GM12878 (cell line): ENCODE measurements at regions of chr3 and their contacts with region 1.

Region 1: DNA sequence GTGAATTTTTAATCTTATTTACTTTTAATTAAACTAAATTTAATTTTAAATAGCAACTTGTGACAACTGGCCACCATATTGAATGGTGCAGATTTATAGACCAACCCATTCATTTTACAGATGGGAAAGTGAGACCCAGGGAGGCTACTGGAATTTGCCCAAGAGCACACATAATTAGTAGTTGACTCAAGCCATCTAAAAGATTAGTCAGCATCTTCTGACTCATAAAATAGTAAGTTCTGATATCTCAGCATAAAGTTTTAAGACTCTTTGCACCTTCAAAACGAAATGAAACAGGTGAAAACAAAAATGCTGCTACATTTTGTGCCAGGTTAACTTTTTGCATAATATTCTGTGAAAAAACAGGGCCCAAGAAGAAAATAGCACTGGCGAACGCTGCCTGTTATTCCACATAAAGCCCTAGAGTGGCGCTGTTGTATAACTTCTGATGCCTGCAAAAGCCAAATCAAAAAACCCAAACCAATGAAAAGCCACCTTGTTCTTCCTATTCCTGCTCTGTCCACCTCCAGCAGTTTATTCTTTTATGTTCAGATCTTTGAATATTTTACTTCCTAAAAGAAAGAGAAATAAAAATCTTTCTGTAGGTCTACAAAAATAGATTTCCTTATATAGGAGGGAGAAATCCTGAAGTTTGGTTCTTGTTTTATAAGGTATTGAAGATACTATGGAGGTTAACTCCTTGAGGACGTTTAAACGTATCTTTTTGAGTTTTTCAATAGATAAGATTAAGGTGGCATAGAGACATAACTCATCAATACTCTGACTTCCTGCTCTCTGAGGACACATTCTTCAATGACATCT is 62.8 kb downstream of the OTOL1 start:
- DNase-seq: no peak
- ATAC-seq: peak; percentile 72
- H3K4me3 ChIP-seq: no peak overlapping the region
- H3K27ac ChIP-seq: no peak overlapping the region
- H3K4me1 ChIP-seq: no peaks in the 10 kb centered on the region
- H3K27me3 ChIP-seq: peaks cover 0 to 3% of the 10 kb centered on the region in 2 experiments; a peak in 1 of 4 replicates
- CTCF ChIP-seq: peak; percentile 74 to 80 (median 80)
- EP300 ChIP-seq: no peak
- POLR2A ChIP-seq: no peak
- RAD21 ChIP-seq: peak; percentile 80

Region 2: GRCh38 chr3:161449787-161450186 is 109.6 kb before region 1 on chr3:
- CTCF ChIA-PET with region 1: no interaction called
- POLR2A ChIA-PET with region 1: no interaction called
- RAD21 ChIA-PET with region 1: no interaction called
- SMC1A ChIA-PET with region 1: no interaction called
- in situ Hi-C with region 1: no loop called
- intact Hi-C with region 1: loop called (anchors 5 kb)
- DNase-seq: no peak
- ATAC-seq: peak; percentile 36; the same call in 2 of the 3 replicates
- H3K4me3 ChIP-seq: no peak overlapping the region
- H3K27ac ChIP-seq: no peak overlapping the region
- H3K4me1 ChIP-seq: no peaks in the 10 kb centered on the region
- H3K27me3 ChIP-seq: no peaks in the 10 kb centered on the region
- CTCF ChIP-seq: no peak; a peak in 1 of 6 replicates
- EP300 ChIP-seq: no peak
- POLR2A ChIP-seq: no peak
- RAD21 ChIP-seq: no peak

Region 3: DNA sequence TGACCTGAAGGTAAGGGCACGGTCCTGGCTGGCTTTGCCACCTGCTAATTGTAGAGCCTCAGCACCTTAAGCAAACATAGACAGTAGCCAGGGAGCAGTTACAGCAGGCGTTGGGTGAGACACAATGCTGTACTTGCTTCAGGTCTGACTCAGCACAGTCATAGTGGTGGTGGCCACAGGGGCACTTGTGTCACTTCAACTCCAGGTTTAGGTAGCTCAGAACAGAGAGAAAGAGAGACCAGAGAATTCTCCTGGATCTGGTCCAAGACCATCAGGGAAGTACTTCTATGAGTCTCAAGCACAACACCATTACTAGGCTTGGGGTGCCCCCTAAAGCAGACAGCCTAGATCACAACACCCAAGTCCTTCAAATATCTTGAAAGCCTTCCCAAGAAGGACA is 141.6 kb after region 1 on chr3:
- CTCF ChIA-PET with region 1: interaction called, 11 read pairs
- POLR2A ChIA-PET with region 1: no interaction called
- RAD21 ChIA-PET with region 1: interaction called, 13 read pairs
- SMC1A ChIA-PET with region 1: interaction called, 17 read pairs
- in situ Hi-C with region 1: no loop called
- intact Hi-C with region 1: loop called (anchors 1 kb)
- DNase-seq: peak; percentile 7
- ATAC-seq: peak; percentile 98
- H3K4me3 ChIP-seq: no peak overlapping the region
- H3K27ac ChIP-seq: no peak overlapping the region
- H3K4me1 ChIP-seq: no peaks in the 10 kb centered on the region
- H3K27me3 ChIP-seq: no peaks in the 10 kb centered on the region
- CTCF ChIP-seq: peak in 1 of 3 experiments; percentile 33; a peak in 1 of 6 replicates
- EP300 ChIP-seq: no peak
- POLR2A ChIP-seq: no peak
- RAD21 ChIP-seq: peak; percentile 25; the same call in 1 of the 2 replicates

Region 4: GRCh38 chr3:162192340-162193029 is 633.1 kb after region 1 on chr3:
- CTCF ChIA-PET with region 1: no interaction called
- POLR2A ChIA-PET with region 1: no interaction called
- RAD21 ChIA-PET with region 1: no interaction called
- SMC1A ChIA-PET with region 1: no interaction called
- in situ Hi-C with region 1: no loop called
- intact Hi-C with region 1: loop called (anchors 5 kb)
- DNase-seq: no peak
- ATAC-seq: no peak
- H3K4me3 ChIP-seq: no peak overlapping the region
- H3K27ac ChIP-seq: no peak overlapping the region
- H3K4me1 ChIP-seq: no peaks in the 10 kb centered on the region
- H3K27me3 ChIP-seq: no peaks in the 10 kb centered on the region
- CTCF ChIP-seq: no peak
- EP300 ChIP-seq: no peak
- POLR2A ChIP-seq: no peak
- RAD21 ChIP-seq: no peak

Region 5: GRCh38 chr3:163490119-163490518 is 1930.7 kb after region 1 on chr3:
- CTCF ChIA-PET with region 1: no interaction called
- POLR2A ChIA-PET with region 1: no interaction called
- RAD21 ChIA-PET with region 1: no interaction called
- SMC1A ChIA-PET with region 1: no interaction called
- in situ Hi-C with region 1: loop called (anchors 25 kb)
- intact Hi-C with region 1: loop called (anchors 1 kb)
- DNase-seq: no peak
- ATAC-seq: peak; percentile 100
- H3K4me3 ChIP-seq: no peak overlapping the region
- H3K27ac ChIP-seq: no peak overlapping the region
- H3K4me1 ChIP-seq: no peaks in the 10 kb centered on the region
- H3K27me3 ChIP-seq: no peaks in the 10 kb centered on the region
- CTCF ChIP-seq: peak; percentile 53 to 82 (median 78)
- EP300 ChIP-seq: no peak
- POLR2A ChIP-seq: no peak
- RAD21 ChIP-seq: peak; percentile 75